Right cardiac atrium (tissue), 5 donors: ENCODE measurements at regions of chr5 and their contacts with region 1.

Region 1: GRCh38 chr5:37837414-37838032 is 2.3 kb downstream of the GDNF start:
- DNase-seq: peak; percentile 75 to 93 (median 92)
- ATAC-seq: peak; percentile 75 to 81
- H3K4me3 ChIP-seq: peak overlapping the region; percentile 55
- H3K27ac ChIP-seq: no peak overlapping the region
- H3K4me1 ChIP-seq: peaks cover 2% of the 10 kb centered on the region
- H3K27me3 ChIP-seq: no peaks in the 10 kb centered on the region

Region 2: GRCh38 chr5:37412515-37413277 is 424.8 kb before region 1 on chr5:
- intact Hi-C with region 1: loop called in 1 of 4 experiments (anchors 5 kb)
- DNase-seq: no peak
- ATAC-seq: peak; percentile 71 to 82
- H3K4me3 ChIP-seq: no peak overlapping the region
- H3K27ac ChIP-seq: no peak overlapping the region
- H3K4me1 ChIP-seq: no peaks in the 10 kb centered on the region
- H3K27me3 ChIP-seq: no peaks in the 10 kb centered on the region

Region 3: DNA sequence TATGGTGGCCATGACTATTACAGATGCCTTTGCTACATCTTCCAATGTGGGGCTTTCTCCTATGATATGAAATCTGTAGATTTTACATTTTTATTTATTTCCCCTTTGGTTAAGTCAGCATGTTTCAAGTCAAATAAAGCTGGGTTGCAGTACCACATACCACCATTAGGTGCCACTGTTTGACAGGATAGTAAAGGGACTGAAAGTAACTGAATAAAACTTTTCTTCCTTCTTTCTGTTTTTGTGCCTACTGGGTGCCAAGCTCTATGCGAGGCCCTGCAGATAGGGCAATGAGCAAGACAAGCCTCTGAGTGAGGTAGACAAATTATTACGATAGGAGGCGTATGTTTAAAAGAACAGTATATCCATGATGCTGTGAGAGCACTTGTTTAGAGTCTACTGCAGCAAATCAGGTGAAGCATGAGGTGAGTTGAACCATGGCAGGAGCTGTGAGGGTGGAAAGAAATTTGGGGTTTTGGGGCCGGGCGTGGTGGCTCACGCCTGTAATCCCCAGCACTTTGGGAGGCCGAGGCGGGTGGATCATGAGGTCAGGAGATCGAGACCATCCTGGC is 62.5 kb before region 1 on chr5:
- intact Hi-C with region 1: no loop called
- DNase-seq: no peak
- ATAC-seq: no peak
- H3K4me3 ChIP-seq: no peak overlapping the region
- H3K27ac ChIP-seq: no peak overlapping the region
- H3K4me1 ChIP-seq: no peaks in the 10 kb centered on the region
- H3K27me3 ChIP-seq: no peaks in the 10 kb centered on the region

Region 4: DNA sequence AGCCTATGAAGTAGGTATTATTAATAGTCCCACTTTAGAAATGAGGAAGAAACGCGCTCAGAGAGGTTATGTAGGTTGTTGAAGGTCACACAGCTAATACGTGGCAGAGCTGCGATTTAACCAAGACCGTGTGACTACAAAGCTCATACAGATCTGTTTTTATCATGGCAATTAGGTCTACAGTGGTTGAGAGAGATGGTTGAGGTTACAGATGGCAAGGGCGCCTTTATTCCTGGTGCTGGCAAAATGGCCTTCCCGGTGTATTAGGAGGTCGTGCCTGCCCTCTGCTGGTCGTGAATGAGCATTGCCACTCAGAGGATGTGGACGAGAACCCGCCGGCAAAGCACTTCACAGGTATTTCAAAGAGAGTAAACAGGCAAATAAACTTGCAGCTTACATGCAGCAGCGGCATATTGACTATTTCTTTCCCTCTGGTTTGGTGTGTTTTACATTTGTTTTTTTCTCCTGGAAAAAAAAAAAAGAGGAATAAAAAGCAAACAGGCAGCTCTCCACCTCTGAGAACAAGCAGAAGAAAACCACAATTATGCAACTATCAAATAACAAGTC is 355.6 kb after region 1 on chr5:
- intact Hi-C with region 1: loop called (anchors 1 to 5 kb)
- DNase-seq: peak; percentile 65 to 87 (median 78)
- ATAC-seq: peak; percentile 73 to 83
- H3K4me3 ChIP-seq: no peak overlapping the region
- H3K27ac ChIP-seq: no peak overlapping the region
- H3K4me1 ChIP-seq: no peaks in the 10 kb centered on the region
- H3K27me3 ChIP-seq: no peaks in the 10 kb centered on the region